ENCODE measurements at regions of chr6 and their contacts with region 1.

Region 1: GRCh38 chr6:88982720-88983119 is 19.3 kb upstream of the RNGTT start:
- DNase-seq: no peak
- ATAC-seq: peak; percentile 98
- H3K4me3 ChIP-seq: no peak overlapping the region
- H3K27ac ChIP-seq: no peak overlapping the region
- H3K4me1 ChIP-seq: peaks cover 7% of the 10 kb centered on the region
- H3K27me3 ChIP-seq: no peaks in the 10 kb centered on the region
- CTCF ChIP-seq: peak; percentile 81

Region 2: GRCh38 chr6:89058627-89059026 is 75.9 kb after region 1 on chr6:
- intact Hi-C with region 1: no loop called
- DNase-seq: no peak
- ATAC-seq: peak; percentile 31
- H3K4me3 ChIP-seq: no peak overlapping the region
- H3K27ac ChIP-seq: no peak overlapping the region
- H3K4me1 ChIP-seq: no peaks in the 10 kb centered on the region
- H3K27me3 ChIP-seq: no peaks in the 10 kb centered on the region
- CTCF ChIP-seq: no peak

Region 3: DNA sequence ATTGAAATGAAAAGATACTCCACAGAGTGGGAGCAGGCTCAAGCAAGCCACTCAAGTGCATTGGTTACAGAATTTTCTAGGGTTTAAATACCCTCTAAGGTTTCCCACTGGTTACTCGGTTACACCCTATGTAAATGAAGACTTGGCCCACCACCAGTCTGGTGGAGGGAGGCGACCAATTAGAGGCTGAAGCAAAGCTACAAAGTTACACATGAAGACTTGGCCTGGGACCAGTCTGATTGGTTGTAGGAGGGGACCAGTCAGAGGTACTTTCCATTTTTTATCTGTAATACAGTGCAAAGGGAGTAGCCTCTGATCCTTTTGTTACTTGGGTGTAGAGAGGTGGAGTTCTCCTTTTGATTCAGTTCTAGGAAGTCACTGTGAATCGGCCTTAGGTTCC is 127.6 kb after region 1 on chr6:
- intact Hi-C with region 1: no loop called
- DNase-seq: no peak
- ATAC-seq: no peak
- H3K4me3 ChIP-seq: no peak overlapping the region
- H3K27ac ChIP-seq: no peak overlapping the region
- H3K4me1 ChIP-seq: no peaks in the 10 kb centered on the region
- H3K27me3 ChIP-seq: no peaks in the 10 kb centered on the region
- CTCF ChIP-seq: no peak

Region 4: GRCh38 chr6:89242574-89243330 is 260.0 kb after region 1 on chr6:
- intact Hi-C with region 1: loop called (anchors 10 kb)
- DNase-seq: no peak
- ATAC-seq: peak; percentile 65
- H3K4me3 ChIP-seq: no peak overlapping the region
- H3K27ac ChIP-seq: no peak overlapping the region
- H3K4me1 ChIP-seq: no peaks in the 10 kb centered on the region
- H3K27me3 ChIP-seq: no peaks in the 10 kb centered on the region
- CTCF ChIP-seq: peak; percentile 47